ENCODE measurements at regions of chr5 and their contacts with region 1.

Region 1: DNA sequence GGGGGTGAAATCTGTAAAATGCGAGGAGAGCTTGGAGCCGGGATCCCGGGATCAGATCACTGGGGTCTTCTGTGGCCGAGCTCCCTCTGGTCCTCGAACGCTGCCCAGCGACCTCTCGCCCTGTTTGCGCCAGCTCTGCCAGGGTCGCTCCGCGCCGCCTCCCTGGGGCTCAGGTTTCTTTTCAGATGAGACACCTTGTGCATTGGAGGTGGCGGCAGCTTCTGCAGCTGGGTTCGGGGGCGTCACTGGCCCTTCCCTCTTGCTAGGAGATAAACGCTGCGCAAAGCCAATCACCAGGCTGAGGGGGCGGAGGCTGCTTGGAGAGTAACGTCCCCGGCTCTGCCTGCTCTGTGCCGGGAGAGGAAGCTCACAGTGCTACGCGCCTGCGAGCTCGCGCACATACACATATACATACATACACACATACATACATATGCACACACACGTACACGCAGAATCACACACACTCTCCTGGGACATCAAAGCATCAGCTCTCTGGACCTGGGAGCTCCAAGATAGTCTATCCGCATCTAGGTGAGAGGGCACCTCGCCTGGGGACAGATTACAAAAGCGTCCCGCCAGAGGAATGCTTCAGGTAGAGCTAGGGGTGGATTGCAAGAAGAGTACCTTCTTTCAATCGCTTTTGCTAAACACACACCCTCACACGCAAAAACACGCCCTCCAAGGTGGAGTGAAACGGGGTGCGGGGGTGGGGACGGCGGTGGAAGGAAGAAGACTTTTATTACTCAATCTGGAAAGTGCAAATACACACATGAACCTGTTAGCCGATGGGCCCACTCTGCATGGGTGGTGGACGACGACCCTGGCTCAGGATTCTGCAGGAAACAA is at the start of gene ST8SIA4:
- DNase-seq: peak; percentile 96
- ATAC-seq: peak; percentile 69
- H3K4me3 Mint-ChIP-seq: peak within 1 kb of the TSS; percentile 97
- H3K27ac Mint-ChIP-seq: peak within 1 kb of the TSS; percentile 98
- H3K4me1 Mint-ChIP-seq: peaks cover 30% of the 10 kb centered on the region
- H3K27me3 Mint-ChIP-seq: no peaks in the 10 kb centered on the region
- total RNA-seq, gene ST8SIA4: 31.7 to 32.0 TPM

Region 2: DNA sequence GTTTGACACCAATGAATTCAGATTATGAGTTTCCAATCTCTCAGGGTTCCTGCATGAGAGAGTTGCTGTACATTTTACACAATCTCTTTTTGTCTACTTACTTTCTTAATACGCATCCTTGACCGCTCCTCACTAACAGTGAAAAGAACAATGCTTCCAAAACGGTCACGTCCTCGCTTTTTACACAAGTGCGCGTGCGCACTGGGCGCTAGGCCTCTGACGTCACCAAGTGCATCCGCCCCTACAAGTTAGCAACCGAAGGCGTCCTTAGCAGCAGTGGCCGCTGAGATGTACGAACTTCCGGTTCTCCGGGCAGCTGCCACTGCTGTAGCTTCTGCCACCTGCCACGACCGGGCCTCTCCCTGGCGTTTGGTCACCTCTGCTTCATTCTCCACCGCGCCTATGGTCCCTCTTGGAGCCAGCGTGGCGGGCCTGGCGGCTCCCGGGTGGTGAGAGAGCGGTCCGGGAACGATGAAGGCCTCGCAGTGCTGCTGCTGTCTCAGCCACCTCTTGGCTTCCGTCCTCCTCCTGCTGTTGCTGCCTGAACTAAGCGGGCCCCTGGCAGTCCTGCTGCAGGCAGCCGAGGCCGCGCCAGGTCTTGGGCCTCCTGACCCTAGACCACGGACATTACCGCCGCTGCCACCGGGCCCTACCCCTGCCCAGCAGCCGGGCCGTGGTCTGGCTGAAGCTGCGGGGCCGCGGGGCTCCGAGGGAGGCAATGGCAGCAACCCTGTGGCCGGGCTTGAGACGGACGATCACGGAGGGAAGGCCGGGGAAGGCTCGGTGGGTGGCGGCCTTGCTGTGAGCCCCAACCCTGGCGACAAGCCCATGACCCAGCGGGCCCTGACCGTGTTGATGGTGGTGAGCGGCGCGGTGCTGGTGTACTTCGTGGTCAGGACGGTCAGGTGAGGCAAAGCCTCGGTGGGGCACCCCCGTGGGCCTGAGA is 367.9 kb before region 1 on chr5 and contains the start of gene FAM174A:
- CTCF ChIA-PET with region 1: interaction called, 3 read pairs
- POLR2A ChIA-PET with region 1: no interaction called
- intact Hi-C with region 1: loop called (anchors 1 to 5 kb)
- DNase-seq: peak; percentile 96
- ATAC-seq: peak; percentile 92
- H3K4me3 Mint-ChIP-seq: peak within 1 kb of the TSS; percentile 90
- H3K27ac Mint-ChIP-seq: peak within 1 kb of the TSS; percentile 93
- H3K4me1 Mint-ChIP-seq: peaks cover 15% of the 10 kb centered on the region
- H3K27me3 Mint-ChIP-seq: no peaks in the 10 kb centered on the region
- total RNA-seq, gene FAM174A: 3.9 to 4.7 TPM

Region 3: DNA sequence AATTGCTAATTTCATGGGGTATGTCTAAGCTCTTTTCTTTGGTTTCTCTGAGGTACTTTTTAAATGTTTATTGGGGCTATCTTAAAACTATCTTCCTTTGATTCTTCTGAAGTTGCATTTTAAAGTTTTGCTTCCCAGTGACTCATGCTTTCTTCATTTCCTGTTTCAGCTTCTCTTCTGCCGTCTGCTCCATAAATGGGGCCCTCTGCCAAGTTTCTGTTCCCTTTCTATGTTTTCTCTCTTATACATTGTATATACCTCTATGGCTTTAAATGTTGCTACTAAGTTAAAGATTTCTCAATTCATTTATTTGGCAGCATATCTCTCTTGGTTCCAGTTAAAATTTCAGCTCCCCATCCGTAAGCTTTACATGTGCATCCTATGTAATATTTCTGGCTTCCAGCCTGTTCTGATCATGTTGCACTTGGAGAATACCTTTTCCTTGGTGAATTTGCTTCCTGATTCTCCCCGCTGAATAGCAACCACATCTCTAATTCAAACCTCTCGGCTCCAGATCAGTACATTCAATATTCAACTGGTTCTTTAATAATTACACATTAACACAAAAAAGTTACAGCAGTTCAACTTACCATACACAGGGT is 125.5 kb before region 1 on chr5:
- CTCF ChIA-PET with region 1: interaction called, 10 read pairs
- POLR2A ChIA-PET with region 1: interaction called, 6 read pairs
- intact Hi-C with region 1: loop called (anchors 1 kb)
- DNase-seq: peak; percentile 42
- ATAC-seq: peak; percentile 40
- H3K4me3 Mint-ChIP-seq: peak overlapping the region; percentile 10
- H3K27ac Mint-ChIP-seq: peak overlapping the region; percentile 80
- H3K4me1 Mint-ChIP-seq: peaks cover 47% of the 10 kb centered on the region
- H3K27me3 Mint-ChIP-seq: no peaks in the 10 kb centered on the region

Region 4: GRCh38 chr5:100840384-100840783 is 62.9 kb before region 1 on chr5:
- CTCF ChIA-PET with region 1: interaction called, 5 read pairs
- POLR2A ChIA-PET with region 1: interaction called, 8 read pairs
- intact Hi-C with region 1: loop called (anchors 1 kb)
- DNase-seq: peak; percentile 55
- ATAC-seq: peak; percentile 84
- H3K4me3 Mint-ChIP-seq: peak overlapping the region; percentile 33
- H3K27ac Mint-ChIP-seq: peak overlapping the region; percentile 87
- H3K4me1 Mint-ChIP-seq: peaks cover 71% of the 10 kb centered on the region
- H3K27me3 Mint-ChIP-seq: no peaks in the 10 kb centered on the region

Region 5: DNA sequence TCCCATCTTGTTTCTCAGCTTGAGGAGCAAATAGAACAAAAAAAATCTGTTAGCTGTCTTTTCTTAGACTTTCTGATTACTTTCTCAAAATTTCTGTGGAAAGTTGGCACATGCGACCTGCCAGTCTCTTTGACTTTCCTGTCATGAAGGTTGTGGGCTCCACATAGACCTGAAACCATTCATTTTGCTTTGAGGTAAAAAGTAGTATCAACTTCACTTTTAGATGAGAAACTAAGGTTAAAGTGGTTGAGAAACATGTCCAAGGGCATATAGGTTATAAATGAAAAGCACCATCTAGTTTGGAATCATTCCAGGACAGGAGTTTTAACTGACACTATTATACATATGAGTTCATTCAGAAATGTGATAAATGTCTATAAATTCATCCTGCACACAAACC is 42.9 kb before region 1 on chr5:
- CTCF ChIA-PET with region 1: interaction called, 28 read pairs
- POLR2A ChIA-PET with region 1: interaction called, 18 read pairs
- intact Hi-C with region 1: loop called (anchors 1 kb)
- DNase-seq: peak; percentile 35
- ATAC-seq: peak; percentile 53
- H3K4me3 Mint-ChIP-seq: no peak overlapping the region
- H3K27ac Mint-ChIP-seq: peak overlapping the region; percentile 87
- H3K4me1 Mint-ChIP-seq: peaks cover 74% of the 10 kb centered on the region
- H3K27me3 Mint-ChIP-seq: no peaks in the 10 kb centered on the region

Region 6: DNA sequence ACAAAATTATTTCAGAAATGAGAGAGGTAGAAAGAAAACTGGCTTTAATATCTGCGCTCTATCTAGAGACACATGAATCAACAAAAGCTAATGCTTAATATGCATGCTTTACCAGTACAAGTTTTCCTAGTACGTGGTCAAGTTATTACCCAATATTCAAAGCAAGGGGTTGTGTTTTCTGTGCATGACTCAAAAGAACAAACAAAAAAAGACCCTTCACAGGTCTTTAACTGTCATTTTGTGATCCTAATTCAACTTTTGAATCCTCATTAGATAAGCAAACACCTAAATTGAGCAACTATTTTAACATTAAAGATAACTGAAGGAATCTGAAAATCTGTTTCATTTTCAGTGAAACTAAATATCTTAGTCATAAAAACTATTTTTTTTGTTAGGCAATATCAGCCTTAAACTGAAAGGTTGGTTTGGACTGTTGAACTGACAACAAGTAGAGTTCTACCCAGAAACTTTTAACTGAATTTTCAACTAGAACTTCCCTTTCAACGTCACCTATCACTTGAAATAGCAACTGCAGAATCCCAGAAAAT is 12.7 kb before region 1 on chr5:
- CTCF ChIA-PET with region 1: interaction called, 7 read pairs
- POLR2A ChIA-PET with region 1: interaction called, 3 read pairs
- intact Hi-C with region 1: loop called (anchors 1 kb)
- DNase-seq: no peak
- ATAC-seq: peak; percentile 66
- H3K4me3 Mint-ChIP-seq: peak overlapping the region; percentile 55
- H3K27ac Mint-ChIP-seq: peak overlapping the region; percentile 88
- H3K4me1 Mint-ChIP-seq: peaks cover 66% of the 10 kb centered on the region
- H3K27me3 Mint-ChIP-seq: no peaks in the 10 kb centered on the region

Region 7: DNA sequence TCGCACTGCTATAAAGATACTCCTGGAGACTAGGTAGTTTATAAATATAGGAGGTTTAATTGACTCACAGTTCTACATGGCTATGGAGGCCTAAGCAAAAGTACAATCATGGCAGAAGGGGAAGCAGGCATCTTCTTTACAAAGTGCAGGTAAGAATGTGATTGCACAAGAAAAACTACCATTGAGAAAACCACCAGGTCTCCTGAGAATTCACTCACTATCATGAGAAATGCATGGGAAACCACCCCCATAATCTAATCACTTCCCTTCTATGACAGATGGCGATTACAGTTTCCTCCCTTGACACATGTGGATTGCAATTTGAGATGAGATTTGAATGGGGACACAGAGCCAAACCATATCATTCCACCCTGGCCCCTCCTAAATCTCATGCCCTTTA is 121.0 kb after region 1 on chr5:
- CTCF ChIA-PET with region 1: no interaction called
- POLR2A ChIA-PET with region 1: no interaction called
- intact Hi-C with region 1: no loop called
- DNase-seq: no peak
- ATAC-seq: no peak
- H3K4me3 Mint-ChIP-seq: no peak overlapping the region
- H3K27ac Mint-ChIP-seq: no peak overlapping the region
- H3K4me1 Mint-ChIP-seq: no peaks in the 10 kb centered on the region
- H3K27me3 Mint-ChIP-seq: no peaks in the 10 kb centered on the region

Region 8: DNA sequence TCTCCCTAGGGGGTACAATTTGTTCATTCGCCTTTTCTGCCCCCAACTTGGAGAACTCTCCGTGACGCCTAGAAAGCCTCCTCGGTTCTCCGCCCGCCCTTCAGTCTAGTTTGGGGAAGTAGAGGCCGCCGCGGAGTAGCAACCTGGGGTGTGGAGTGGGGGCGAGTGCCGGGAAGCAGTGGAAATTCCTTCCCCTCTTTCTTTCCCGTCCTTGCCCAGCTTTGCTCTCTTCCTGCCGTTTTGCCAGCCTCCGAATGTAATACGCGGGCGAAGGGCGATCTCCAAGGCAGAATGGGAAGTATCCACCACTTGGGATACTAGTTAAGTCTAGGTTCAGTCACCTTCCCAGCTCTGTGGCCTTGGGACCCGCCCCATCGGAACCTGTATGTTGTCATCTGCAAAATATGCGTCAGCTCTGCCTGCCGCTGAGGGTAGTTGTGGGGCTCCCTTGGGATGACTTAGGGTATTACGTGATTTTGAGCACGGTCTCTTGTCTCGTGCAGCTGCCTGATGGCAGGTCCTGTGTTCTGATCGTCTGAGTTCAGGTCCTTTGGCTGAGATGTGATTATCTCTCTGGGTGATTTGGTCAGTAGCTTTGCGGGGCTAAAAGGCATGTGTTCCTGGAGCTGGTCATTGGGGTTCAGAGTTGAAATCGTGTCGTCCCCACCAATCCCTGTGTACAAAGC is 1852.6 kb after region 1 on chr5:
- CTCF ChIA-PET with region 1: no interaction called
- POLR2A ChIA-PET with region 1: no interaction called
- intact Hi-C with region 1: loop called in 1 of 2 experiments (anchors 10 kb)
- DNase-seq: peak; percentile 90
- ATAC-seq: peak; percentile 89
- H3K4me3 Mint-ChIP-seq: peak overlapping the region; percentile 84
- H3K27ac Mint-ChIP-seq: peak overlapping the region; percentile 98
- H3K4me1 Mint-ChIP-seq: peaks cover 52% of the 10 kb centered on the region
- H3K27me3 Mint-ChIP-seq: peaks cover 9% of the 10 kb centered on the region

Measured in activated CD4-positive, alpha-beta T cell treated with anti-CD3 and anti-CD28 coated beads for 36 hours (primary cell).